ENCODE measurements at regions of chr16 and their contacts with region 1.

Region 1: DNA sequence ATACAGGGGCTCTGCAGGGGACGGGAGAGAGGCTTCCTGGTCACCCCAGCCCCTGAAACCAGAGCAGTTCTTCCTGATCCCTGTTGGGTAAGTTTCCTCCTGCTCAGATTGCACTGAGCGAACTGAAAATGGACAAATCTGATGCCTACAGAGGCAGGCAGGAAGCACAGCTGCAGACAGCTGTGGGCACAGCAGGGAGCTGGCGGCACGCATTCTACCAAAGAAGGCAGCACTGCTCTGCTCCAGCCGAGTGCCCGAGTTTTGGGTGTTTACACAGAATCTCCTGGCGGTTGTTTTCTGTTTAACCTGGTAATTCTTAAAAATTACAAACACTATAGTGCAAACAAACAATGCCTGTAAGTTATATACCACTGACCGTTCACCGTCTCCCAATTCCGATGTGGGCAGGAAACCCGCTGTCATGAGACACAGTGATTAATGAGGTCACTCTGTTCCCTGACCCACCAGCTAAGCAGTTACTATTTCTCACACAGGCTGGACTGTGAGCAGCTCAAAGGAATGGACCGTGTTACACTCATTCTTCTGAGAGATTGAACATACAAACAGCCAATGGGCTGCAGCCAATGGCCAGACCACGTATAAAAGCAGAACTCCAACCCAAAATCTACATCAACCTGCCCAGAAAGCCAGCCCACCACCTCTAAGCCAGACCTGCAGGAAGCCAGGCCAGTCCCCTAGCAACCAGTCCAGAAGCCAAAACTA is 25.5 kb downstream of the NSMCE1 start:
- DNase-seq: peak; percentile 98
- ATAC-seq: peak; percentile 79
- H3K4me3 ChIP-seq: peak overlapping the region; percentile 1; the same call in 1 of the 2 replicates
- H3K27ac ChIP-seq: peak overlapping the region; percentile 94
- H3K4me1 ChIP-seq: peaks cover 37% of the 10 kb centered on the region
- H3K27me3 ChIP-seq: no peaks in the 10 kb centered on the region
- CTCF ChIP-seq: peak; percentile 13; the same call in 1 of the 2 replicates
- POLR2A ChIP-seq: no peak; the same call in 1 of the 2 replicates
- RAD21 ChIP-seq: peak; percentile 18

Region 2: DNA sequence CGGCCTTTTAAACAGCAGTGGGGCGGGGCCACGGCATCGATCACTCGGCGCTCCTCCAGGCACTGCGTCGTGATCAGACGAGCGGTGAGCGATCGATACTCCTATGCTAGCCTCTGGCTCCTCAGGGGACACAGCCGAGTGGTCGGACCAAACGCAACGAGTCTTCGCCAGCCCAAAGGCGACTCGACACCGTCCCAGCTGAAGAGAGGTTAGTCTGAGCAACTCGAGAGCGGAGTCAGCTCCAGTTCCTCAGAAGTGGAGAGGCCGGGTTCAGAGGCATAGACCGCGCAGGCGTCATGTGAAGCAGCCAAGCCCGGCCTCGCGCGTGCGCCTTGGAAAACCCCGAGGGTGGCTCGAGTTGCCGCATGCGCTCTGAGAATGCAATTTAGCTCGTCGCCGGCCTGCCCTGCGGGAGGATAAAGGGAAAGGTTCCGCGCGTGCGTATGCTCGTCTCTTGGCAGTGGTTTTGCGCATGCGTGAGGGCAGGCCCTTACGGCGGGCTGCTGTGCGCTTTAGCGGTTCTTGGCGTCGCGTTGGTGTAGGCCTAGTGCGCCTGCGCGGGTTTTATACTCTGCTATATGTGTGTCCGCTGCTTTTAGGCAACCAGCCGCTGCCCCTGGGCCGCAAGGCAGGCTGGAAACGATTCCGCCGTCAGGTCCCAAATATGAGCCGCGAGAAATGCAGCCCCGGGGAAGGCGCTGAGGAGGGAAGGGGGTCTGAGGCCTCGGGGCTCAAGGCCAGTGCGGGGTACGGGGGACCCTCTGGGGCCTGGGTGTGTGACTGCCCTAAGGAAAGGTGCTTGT is 39.4 kb before region 1 on chr16 and contains the start of gene KDM8:
- CTCF ChIA-PET with region 1: no interaction called
- POLR2A ChIA-PET with region 1: no interaction called
- dilution Hi-C with region 1: no loop called
- in situ Hi-C with region 1: no loop called
- intact Hi-C with region 1: loop called (anchors 1 kb)
- DNase-seq: peak; percentile 99
- ATAC-seq: peak; percentile 96
- H3K4me3 ChIP-seq: peak within 1 kb of the TSS; percentile 68
- H3K27ac ChIP-seq: peak within 1 kb of the TSS; percentile 96
- H3K4me1 ChIP-seq: peaks cover 2% of the 10 kb centered on the region
- H3K27me3 ChIP-seq: no peaks in the 10 kb centered on the region
- CTCF ChIP-seq: no peak
- POLR2A ChIP-seq: peak; percentile 74
- RAD21 ChIP-seq: no peak
- total RNA-seq, gene KDM8: 3.2 and 3.6 TPM in 2 replicates

Measured in IMR-90 (cell line).